Right cardiac atrium (tissue), 5 donors: ENCODE measurements at regions of chr2 and their contacts with region 1.

Region 1: GRCh38 chr2:178804791-178805190 is 2.4 kb downstream of the TTN start:
- DNase-seq: no peak
- ATAC-seq: peak in 1 of 2 donors; percentile 6
- H3K4me3 ChIP-seq: peak overlapping the region; percentile 88
- H3K27ac ChIP-seq: peak overlapping the region; percentile 88
- H3K4me1 ChIP-seq: no peaks in the 10 kb centered on the region
- H3K27me3 ChIP-seq: no peaks in the 10 kb centered on the region

Region 2: GRCh38 chr2:178845566-178846457 is 41.0 kb after region 1 on chr2:
- intact Hi-C with region 1: no loop called
- DNase-seq: no peak
- ATAC-seq: peak; percentile 51 to 58
- H3K4me3 ChIP-seq: no peak overlapping the region
- H3K27ac ChIP-seq: no peak overlapping the region
- H3K4me1 ChIP-seq: no peaks in the 10 kb centered on the region
- H3K27me3 ChIP-seq: no peaks in the 10 kb centered on the region

Region 3: DNA sequence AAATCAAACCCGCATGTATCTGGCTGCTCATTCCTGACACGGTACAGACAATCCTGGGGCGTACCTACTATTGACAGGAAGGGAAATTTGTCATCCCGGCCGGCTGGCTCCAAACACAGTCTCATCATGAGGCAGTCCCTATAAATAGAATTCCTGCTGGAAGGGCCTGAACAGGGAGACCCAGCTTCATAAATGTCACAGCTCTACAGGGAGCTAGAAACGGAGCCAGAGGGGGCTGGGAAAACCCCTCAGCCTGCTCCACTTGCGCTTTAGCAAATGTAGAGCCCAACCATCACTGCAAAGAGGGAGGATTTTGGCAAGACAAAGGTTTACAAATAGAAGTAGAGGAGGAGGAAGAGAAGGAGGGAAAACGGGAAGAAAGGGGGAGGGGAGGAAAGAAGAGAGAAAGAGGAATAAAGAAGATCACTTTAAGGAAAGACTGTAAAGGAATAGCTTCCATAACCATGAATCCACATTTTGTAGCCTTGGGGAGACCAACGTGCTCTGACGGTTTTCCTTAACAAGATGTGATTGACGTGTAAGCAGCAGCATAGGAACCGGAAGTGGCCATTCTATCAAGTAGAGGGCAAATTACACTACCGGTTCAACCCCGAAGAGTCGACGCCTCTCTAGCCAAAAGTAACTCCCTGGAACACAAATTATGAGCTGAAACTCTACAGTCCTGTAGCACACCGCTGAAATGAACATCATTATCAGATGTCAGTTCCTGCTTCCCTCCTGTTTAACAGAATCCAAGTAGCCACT is 59.2 kb after region 1 on chr2:
- intact Hi-C with region 1: loop called in 1 of 4 experiments (anchors 5 kb)
- DNase-seq: peak; percentile 78 to 87 (median 85)
- ATAC-seq: peak; percentile 89 to 94
- H3K4me3 ChIP-seq: peak overlapping the region; percentile 5
- H3K27ac ChIP-seq: peak overlapping the region; percentile 100
- H3K4me1 ChIP-seq: peaks cover 8% of the 10 kb centered on the region
- H3K27me3 ChIP-seq: no peaks in the 10 kb centered on the region

Region 4: GRCh38 chr2:178870703-178871102 is 65.9 kb after region 1 on chr2:
- intact Hi-C with region 1: loop called in 1 of 4 experiments (anchors 10 kb)
- DNase-seq: peak in 1 of 3 donors; percentile 26
- ATAC-seq: peak; percentile 10 to 78
- H3K4me3 ChIP-seq: no peak overlapping the region
- H3K27ac ChIP-seq: no peak overlapping the region
- H3K4me1 ChIP-seq: no peaks in the 10 kb centered on the region
- H3K27me3 ChIP-seq: no peaks in the 10 kb centered on the region

Region 5: DNA sequence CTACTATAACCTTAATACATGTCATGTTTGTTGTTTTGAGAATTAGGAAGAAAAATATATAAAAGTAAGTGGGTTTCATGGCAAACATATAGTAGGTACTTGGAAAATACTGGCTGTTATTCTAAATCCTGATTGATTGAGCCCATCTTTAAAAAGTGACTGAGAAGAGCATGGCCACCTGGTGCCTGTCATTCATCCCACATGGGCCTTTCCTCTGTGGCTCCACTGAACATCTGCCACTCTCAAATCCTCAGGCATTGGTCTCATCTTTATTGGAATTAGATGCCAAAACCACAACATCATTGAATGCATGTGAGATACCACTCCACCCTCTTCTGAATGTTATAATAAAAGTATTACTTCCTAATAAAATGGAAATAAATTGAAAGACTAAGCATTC is 104.0 kb after region 1 on chr2:
- intact Hi-C with region 1: loop called in 3 of 4 experiments (anchors 2 to 5 kb)
- DNase-seq: no peak
- ATAC-seq: no peak
- H3K4me3 ChIP-seq: no peak overlapping the region
- H3K27ac ChIP-seq: no peak overlapping the region
- H3K4me1 ChIP-seq: no peaks in the 10 kb centered on the region
- H3K27me3 ChIP-seq: no peaks in the 10 kb centered on the region

Region 6: DNA sequence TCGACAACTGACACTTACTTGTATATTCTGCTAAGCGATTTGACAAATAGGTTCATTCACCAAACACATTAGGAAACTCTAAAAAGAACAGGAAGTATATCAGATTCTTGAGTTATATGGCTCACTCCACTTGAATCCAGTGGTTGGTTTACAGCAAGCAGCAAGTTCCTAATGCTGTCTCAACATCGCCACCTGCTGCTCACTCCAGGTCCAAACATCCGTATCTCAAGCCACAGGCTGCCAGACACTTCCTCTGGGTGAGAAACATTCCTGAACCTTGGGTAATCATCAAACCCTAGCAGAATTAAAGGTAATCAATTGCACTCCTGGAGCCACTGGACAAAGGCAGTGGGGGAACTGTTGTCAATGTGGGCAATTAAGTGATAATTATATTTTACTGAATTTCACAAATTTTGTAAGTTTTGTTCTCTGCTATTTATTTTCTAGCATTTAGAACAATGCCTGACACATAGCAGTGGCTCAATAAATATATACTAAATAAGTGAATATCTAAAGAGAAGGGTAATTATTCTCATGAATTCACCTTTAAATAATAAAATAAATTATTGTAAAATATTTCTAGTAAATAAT is 109.6 kb after region 1 on chr2:
- intact Hi-C with region 1: loop called in 3 of 4 experiments (anchors 2 to 5 kb)
- DNase-seq: peak; percentile 84 to 93 (median 91)
- ATAC-seq: peak; percentile 89 to 92
- H3K4me3 ChIP-seq: no peak overlapping the region
- H3K27ac ChIP-seq: no peak overlapping the region
- H3K4me1 ChIP-seq: no peaks in the 10 kb centered on the region
- H3K27me3 ChIP-seq: no peaks in the 10 kb centered on the region